ENCODE measurements at regions of chr12 and their contacts with region 1.

Region 1: GRCh38 chr12:117874842-117875434 is 93.9 kb downstream of the KSR2 start:
- DNase-seq: peak; percentile 87
- H3K4me3 Mint-ChIP-seq: no peak overlapping the region
- H3K27ac Mint-ChIP-seq: no peak overlapping the region
- H3K4me1 Mint-ChIP-seq: no peaks in the 10 kb centered on the region
- H3K27me3 Mint-ChIP-seq: peaks cover 15% of the 10 kb centered on the region
- CTCF ChIP-seq: peak; percentile 95

Region 2: DNA sequence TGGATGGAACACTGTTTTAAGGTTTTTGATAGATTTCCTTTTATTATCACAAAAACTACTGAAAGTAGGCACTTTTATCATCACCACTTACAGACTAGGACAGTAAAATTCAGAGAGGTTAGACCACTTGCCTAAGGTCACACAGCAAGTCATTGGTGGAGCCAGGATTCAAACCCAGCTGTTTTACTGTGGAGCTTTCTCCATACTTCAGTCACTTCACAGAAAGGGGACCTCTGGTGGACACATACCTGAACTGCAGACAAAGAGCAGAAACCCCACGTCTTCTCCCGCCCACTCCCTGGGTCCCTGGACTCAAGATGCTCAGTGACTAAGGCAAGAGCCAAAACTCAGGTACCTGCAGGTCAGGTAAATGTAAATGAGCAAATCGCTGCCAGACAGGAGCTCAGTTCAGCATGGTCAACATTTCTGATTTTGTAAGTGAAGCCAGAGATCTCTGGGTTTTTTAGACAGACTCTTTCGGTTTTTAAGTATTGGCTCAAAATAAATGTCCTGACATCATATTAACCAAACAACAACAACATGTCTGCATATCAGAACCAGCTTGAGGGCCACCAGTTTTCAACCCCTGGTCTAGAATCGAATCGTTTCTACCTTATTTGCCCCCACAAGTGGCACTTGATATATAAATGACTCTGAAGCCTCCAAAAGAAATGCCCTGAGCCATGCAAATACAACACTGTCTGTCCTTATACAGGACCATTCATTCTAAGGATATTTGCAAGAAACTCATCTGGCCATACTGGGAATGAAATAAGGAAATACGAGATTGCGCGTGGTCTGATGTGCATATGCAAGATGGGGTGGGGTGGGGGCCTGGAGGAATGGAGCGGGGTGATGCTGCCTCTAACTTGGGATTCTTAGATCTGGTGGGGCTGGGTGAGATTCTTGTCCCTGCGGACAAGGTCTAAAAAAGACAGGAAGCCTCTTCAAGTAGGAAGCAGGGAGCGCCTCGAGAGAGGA is 17.0 kb before region 1 on chr12:
- CTCF ChIA-PET with region 1: interaction called, 13 read pairs
- intact Hi-C with region 1: no loop called
- DNase-seq: peak; percentile 77
- H3K4me3 Mint-ChIP-seq: no peak overlapping the region
- H3K27ac Mint-ChIP-seq: no peak overlapping the region
- H3K4me1 Mint-ChIP-seq: peaks cover 9% of the 10 kb centered on the region
- H3K27me3 Mint-ChIP-seq: peaks cover 2% of the 10 kb centered on the region
- CTCF ChIP-seq: peak; percentile 71

Region 3: GRCh38 chr12:117936722-117937484 is 62.0 kb after region 1 on chr12:
- CTCF ChIA-PET with region 1: no interaction called
- intact Hi-C with region 1: no loop called
- DNase-seq: no peak
- H3K4me3 Mint-ChIP-seq: no peak overlapping the region
- H3K27ac Mint-ChIP-seq: no peak overlapping the region
- H3K4me1 Mint-ChIP-seq: peaks cover 10% of the 10 kb centered on the region
- H3K27me3 Mint-ChIP-seq: no peaks in the 10 kb centered on the region
- CTCF ChIP-seq: no peak

Region 4: DNA sequence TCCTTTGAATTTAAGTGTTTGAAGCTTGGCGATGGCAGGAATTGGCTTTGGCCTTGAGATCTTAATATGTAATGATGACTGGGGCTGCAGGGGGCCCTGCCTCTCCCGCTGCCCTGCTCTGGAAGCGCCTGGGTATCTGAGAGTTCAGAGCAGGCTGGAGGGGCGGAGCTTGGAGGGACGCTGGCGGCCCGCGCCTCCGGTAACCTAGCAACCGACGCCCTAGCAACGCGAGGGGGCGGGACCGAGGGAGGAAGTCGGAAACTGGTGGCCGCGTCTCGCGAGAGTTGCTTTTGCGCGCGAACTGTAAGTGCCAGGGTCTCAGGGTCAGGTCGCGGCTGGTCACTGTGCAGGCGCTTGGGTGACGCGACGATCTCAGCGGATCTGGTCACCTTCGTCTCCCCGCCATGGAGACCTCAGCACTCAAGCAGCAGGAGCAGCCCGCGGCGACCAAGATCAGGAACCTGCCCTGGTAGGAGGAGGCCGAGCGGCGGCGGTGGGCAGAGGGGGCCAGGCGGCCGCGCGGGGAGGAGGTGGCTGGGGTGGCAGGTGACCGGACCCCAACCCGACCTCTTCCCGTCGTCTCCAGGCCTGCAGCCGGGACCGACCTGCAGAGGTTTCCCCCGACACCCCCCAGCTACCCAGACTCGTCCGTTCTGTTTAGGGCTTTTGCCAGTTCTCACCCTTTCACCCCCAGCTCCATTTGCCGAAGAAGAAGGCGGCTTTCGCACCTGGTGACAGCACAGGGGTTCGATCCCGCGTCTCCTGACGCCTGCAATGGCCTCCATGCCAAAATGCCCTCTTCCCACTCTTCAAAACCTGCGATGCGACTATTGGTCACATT is 141.7 kb after region 1 on chr12 and contains the start of gene RFC5:
- CTCF ChIA-PET with region 1: interaction called, 9 read pairs
- intact Hi-C with region 1: loop called (anchors 2 kb)
- DNase-seq: peak; percentile 99
- H3K4me3 Mint-ChIP-seq: peak within 1 kb of the TSS; percentile 88
- H3K27ac Mint-ChIP-seq: peak within 1 kb of the TSS; percentile 97
- H3K4me1 Mint-ChIP-seq: peaks cover 16% of the 10 kb centered on the region
- H3K27me3 Mint-ChIP-seq: no peaks in the 10 kb centered on the region
- CTCF ChIP-seq: no peak
- total RNA-seq, gene RFC5: 52.0 and 54.6 TPM in 2 replicates

Region 5: GRCh38 chr12:118035246-118036041 is 160.5 kb after region 1 on chr12:
- CTCF ChIA-PET with region 1: interaction called, 12 read pairs
- intact Hi-C with region 1: loop called (anchors 1 kb)
- DNase-seq: peak; percentile 39
- H3K4me3 Mint-ChIP-seq: no peak overlapping the region
- H3K27ac Mint-ChIP-seq: peak overlapping the region; percentile 63
- H3K4me1 Mint-ChIP-seq: no peaks in the 10 kb centered on the region
- H3K27me3 Mint-ChIP-seq: no peaks in the 10 kb centered on the region
- CTCF ChIP-seq: no peak

Region 6: GRCh38 chr12:118103604-118104382 is 228.9 kb after region 1 on chr12 and contains the start of gene VSIG10:
- CTCF ChIA-PET with region 1: no interaction called
- intact Hi-C with region 1: loop called (anchors 10 kb)
- DNase-seq: peak; percentile 87
- H3K4me3 Mint-ChIP-seq: peak within 1 kb of the TSS; percentile 77
- H3K27ac Mint-ChIP-seq: peak within 1 kb of the TSS; percentile 64
- H3K4me1 Mint-ChIP-seq: peaks cover 41% of the 10 kb centered on the region
- H3K27me3 Mint-ChIP-seq: no peaks in the 10 kb centered on the region
- CTCF ChIP-seq: no peak
- total RNA-seq, gene VSIG10: 52.0 and 53.6 TPM in 2 replicates

Region 7: GRCh38 chr12:118135788-118136558 is 261.0 kb after region 1 on chr12 and contains the start of gene PEBP1:
- CTCF ChIA-PET with region 1: interaction called, 3 read pairs
- intact Hi-C with region 1: loop called (anchors 10 kb)
- DNase-seq: peak; percentile 98
- H3K4me3 Mint-ChIP-seq: peak within 1 kb of the TSS; percentile 86
- H3K27ac Mint-ChIP-seq: peak within 1 kb of the TSS; percentile 92
- H3K4me1 Mint-ChIP-seq: peaks cover 29% of the 10 kb centered on the region
- H3K27me3 Mint-ChIP-seq: no peaks in the 10 kb centered on the region
- CTCF ChIP-seq: no peak
- total RNA-seq, gene PEBP1: 99.8 and 109 TPM in 2 replicates

Measured in Calu3 (cell line).